ENCODE measurements at regions of chr2 and their contacts with region 1.

Region 1: GRCh38 chr2:197011799-197012641 is 85.5 kb upstream of the PGAP1 start:
- DNase-seq: peak in 32 of 42 donors; percentile 22 to 82 (median 60)

Region 2: GRCh38 chr2:197124639-197125390 is 112.8 kb after region 1 on chr2:
- intact Hi-C with region 1: no loop called
- DNase-seq: peak in 3 of 42 donors; percentile 7 to 57 (median 10)

Region 3: DNA sequence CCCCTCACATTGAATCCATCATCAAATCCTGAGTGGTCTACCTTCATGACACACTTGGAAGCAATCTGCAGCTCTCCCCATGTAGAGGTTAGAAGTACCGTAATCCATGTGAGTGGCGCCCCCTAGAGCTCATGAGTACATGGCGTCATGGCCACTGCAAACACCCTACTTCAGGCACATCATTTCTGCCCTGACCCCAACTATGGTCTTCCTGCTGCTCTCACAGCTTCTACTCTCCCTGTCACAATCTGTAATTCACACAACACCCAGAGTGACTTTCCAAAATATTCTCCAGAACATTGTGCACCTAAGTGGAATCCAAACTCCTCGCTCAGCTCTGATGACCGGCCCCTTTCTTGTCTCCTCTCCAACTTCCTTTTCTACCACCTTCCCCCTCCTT is 156.7 kb after region 1 on chr2:
- intact Hi-C with region 1: loop called (anchors 5 kb)
- DNase-seq: peak; percentile 49 to 94 (median 80)

Region 4: GRCh38 chr2:197310271-197310985 is 298.4 kb after region 1 on chr2 and contains the start of gene ANKRD44:
- intact Hi-C with region 1: loop called (anchors 10 kb)
- DNase-seq: peak; percentile 73 to 96 (median 90)